Activated CD4-positive, alpha-beta T cell treated with anti-CD3 and anti-CD28 coated beads for 36 hours (primary cell): ENCODE measurements at regions of chr13 and their contacts with region 1.

Region 1: DNA sequence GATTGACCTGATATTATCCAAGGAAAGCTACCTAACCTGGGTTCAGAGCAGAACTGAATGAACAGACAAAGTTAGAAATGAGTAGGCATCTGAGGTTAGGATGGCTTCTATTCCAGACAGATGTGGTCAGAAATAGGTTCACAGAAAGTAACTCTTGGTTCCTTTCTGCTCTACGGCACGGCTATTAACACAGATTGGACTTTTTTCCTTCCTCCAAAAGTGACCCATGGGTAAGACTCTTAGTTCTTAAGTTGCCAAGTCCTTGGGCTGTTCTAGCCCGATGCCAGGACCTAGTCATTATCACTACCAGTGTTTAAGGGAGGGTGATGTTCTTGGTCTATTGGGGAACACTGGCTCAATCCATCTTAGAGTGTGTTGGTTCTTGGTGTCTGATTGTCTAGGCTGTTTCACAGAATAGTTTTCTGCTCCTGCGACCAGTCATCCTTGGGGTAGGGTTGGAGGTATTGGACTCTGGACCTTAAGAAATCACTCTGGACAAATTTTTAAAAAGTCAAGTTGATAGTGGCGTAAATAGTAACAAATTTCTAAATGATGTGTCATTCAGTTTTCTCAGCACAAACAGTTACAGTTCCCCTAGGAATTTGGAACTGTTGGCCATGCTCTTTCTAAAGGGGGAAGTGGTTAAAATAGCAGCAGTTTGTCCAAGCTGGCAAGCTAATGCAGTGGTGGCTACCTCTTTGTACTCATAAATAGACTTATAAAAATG is 60.1 kb upstream of the MYCBP2 start:
- DNase-seq: no peak
- ATAC-seq: peak; percentile 30
- H3K4me3 Mint-ChIP-seq: no peak overlapping the region
- H3K27ac Mint-ChIP-seq: no peak overlapping the region
- H3K4me1 Mint-ChIP-seq: peaks cover 10% of the 10 kb centered on the region
- H3K27me3 Mint-ChIP-seq: no peaks in the 10 kb centered on the region

Region 2: GRCh38 chr13:77345150-77345780 is 41.8 kb before region 1 on chr13:
- CTCF ChIA-PET with region 1: interaction called, 3 read pairs
- POLR2A ChIA-PET with region 1: interaction called, 11 read pairs
- intact Hi-C with region 1: loop called in 1 of 2 experiments (anchors 5 kb)
- DNase-seq: peak; percentile 33
- ATAC-seq: peak; percentile 90
- H3K4me3 Mint-ChIP-seq: peak overlapping the region; percentile 11
- H3K27ac Mint-ChIP-seq: peak overlapping the region; percentile 72
- H3K4me1 Mint-ChIP-seq: peaks cover 15% of the 10 kb centered on the region
- H3K27me3 Mint-ChIP-seq: no peaks in the 10 kb centered on the region

Region 3: DNA sequence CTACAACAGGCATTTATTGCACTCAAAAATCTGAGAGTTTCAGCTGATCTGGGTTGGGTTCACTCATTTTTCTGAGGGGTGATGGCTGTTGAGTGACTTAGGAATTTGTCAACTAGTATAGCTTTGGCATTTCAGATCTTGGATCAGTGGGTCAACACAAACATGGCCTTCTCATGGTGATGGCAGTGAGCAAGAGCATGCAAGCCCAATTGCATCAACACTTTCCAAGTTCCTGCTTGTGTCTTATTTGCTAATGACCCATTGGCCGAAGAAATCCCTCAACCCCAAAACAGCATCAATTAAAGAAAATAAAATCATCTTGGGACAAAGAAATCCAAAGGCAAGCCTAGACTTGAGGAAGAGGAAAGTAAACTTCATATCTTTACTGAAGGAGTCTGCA is 36.2 kb before region 1 on chr13:
- CTCF ChIA-PET with region 1: no interaction called
- POLR2A ChIA-PET with region 1: interaction called, 11 read pairs
- intact Hi-C with region 1: loop called in 1 of 2 experiments (anchors 5 kb)
- DNase-seq: no peak
- ATAC-seq: no peak
- H3K4me3 Mint-ChIP-seq: no peak overlapping the region
- H3K27ac Mint-ChIP-seq: no peak overlapping the region
- H3K4me1 Mint-ChIP-seq: peaks cover 13% of the 10 kb centered on the region
- H3K27me3 Mint-ChIP-seq: peaks cover 2% of the 10 kb centered on the region

Region 4: GRCh38 chr13:77416666-77417212 is 29.7 kb after region 1 on chr13:
- CTCF ChIA-PET with region 1: no interaction called
- POLR2A ChIA-PET with region 1: no interaction called
- intact Hi-C with region 1: loop called in 1 of 2 experiments (anchors 1 kb)
- DNase-seq: no peak
- ATAC-seq: no peak
- H3K4me3 Mint-ChIP-seq: no peak overlapping the region
- H3K27ac Mint-ChIP-seq: no peak overlapping the region
- H3K4me1 Mint-ChIP-seq: peaks cover 10% of the 10 kb centered on the region
- H3K27me3 Mint-ChIP-seq: no peaks in the 10 kb centered on the region